ENCODE measurements at regions of chr12 and their contacts with region 1.

Region 1: GRCh38 chr12:102513272-102513671 is 32.9 kb upstream of the IGF1 start:
- DNase-seq: peak; percentile 48
- ATAC-seq: peak; percentile 95
- H3K4me3 ChIP-seq: no peak overlapping the region
- H3K27ac ChIP-seq: peak overlapping the region; percentile 45
- H3K4me1 ChIP-seq: peaks cover 19% of the 10 kb centered on the region
- H3K27me3 ChIP-seq: no peaks in the 10 kb centered on the region
- CTCF ChIP-seq: no peak
- EP300 ChIP-seq: 0 out of 4 replicates have a peak, but pooled peaks of 1 of the 2 experiments have one; percentile 45
- POLR2A ChIP-seq: no peak
- RAD21 ChIP-seq: no peak

Region 2: DNA sequence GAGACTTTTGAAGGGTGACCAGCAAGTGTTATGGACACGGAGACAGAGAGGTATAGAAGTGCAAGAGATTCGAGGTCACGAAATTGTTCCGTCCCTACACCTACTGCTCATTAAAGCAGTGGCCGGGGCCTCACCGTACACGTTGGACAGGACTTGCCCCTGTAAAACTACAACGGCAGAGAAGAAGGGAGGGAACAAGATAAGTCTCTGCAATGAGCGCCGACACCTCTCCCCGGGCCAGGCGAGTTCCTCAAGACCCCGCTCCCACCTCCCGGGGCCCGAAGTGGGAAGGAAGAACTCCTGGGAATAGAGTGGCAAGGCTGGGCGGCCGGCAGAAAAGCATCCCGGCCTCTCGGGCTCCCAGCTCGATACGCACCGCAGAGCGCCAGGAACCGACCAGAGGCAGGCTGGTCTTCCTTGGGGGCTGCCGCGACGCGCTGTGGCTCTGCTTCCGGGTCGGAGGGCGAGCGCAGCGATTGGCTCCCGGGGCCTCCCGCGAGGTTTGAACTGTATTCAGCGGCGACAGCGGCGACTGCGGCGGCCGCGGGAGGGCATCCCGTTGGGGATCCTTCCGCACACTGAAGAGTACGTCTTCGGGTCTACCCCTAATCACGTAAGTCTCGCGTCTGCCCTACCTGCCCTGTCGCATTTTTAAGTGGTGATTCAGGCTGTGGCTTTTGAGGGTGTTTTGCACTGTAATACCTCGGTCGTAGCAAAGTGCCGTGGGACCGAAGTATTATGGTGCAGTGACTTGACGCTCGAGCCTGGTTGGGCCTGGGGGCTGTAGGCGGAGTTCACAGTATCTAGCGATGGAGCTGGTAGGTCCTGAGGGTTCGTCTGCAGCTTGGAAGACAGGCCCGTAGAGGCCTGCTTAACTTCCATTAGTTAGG is 393.4 kb before region 1 on chr12 and contains the starts of genes NUP37 and PARPBP:
- CTCF ChIA-PET with region 1: no interaction called
- POLR2A ChIA-PET with region 1: no interaction called
- RAD21 ChIA-PET with region 1: no interaction called
- SMC1A ChIA-PET with region 1: no interaction called
- in situ Hi-C with region 1: no loop called
- intact Hi-C with region 1: no loop called
- DNase-seq: peak; percentile 68
- ATAC-seq: peak; percentile 95
- H3K4me3 ChIP-seq: peak within 1 kb of the TSS; percentile 88
- H3K27ac ChIP-seq: peak within 1 kb of the TSS; percentile 86
- H3K4me1 ChIP-seq: no peaks in the 10 kb centered on the region
- H3K27me3 ChIP-seq: no peaks in the 10 kb centered on the region
- CTCF ChIP-seq: peak in 1 of 3 experiments; percentile 8; a peak in 1 of 6 replicates
- EP300 ChIP-seq: 0 out of 4 replicates have a peak, but pooled peaks of 1 of the 2 experiments have one; percentile 6
- POLR2A ChIP-seq: peak; percentile 95
- RAD21 ChIP-seq: no peak
- polyA plus RNA-seq, gene NUP37: 191 to 250 TPM
- polyA plus RNA-seq, gene PARPBP: 29.2 to 40.3 TPM

Region 3: DNA sequence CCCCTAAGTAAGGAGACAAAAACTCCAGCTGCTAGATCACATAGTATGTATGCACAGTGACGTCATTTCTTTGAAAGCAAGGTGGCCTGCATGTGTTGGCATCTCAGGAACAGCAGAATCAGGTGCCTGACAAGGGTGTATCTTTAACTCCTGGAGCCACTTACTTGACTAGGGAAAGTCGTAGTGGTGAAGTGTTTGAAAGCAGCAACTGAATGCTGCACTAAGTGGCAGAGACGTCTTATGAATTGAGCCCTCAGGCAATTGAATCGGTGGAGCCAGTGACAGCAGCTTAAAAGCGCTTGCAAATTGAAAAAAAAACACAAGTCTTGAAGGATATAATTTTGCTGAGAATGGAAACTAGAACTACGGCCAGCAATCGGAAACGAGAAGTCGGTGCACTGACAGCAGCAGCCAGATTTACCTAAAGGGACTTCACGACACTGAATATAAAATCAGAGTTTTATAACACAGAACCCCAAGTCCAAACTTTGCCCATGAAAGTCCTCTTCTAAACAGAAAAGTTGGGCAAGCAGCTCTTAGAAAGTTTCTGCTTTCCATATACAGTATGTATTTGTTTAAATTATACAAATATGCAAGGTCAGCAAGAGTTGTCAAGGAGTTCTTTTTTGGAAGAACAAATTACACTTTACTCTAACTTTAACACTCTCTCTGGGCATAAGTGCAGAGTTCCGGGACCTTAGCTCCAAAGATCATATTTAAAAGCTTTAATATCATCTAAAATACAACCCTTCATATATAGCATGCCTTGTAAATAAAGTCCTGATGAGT is 34.0 kb before region 1 on chr12:
- CTCF ChIA-PET with region 1: interaction called, 24 read pairs
- POLR2A ChIA-PET with region 1: interaction called, 4 read pairs
- RAD21 ChIA-PET with region 1: interaction called, 28 read pairs
- SMC1A ChIA-PET with region 1: interaction called, 43 read pairs
- in situ Hi-C with region 1: no loop called
- intact Hi-C with region 1: no loop called
- DNase-seq: peak; percentile 62
- ATAC-seq: peak; percentile 54
- H3K4me3 ChIP-seq: peak overlapping the region; percentile 59
- H3K27ac ChIP-seq: peak overlapping the region; percentile 78
- H3K4me1 ChIP-seq: peaks cover 53% of the 10 kb centered on the region
- H3K27me3 ChIP-seq: no peaks in the 10 kb centered on the region
- CTCF ChIP-seq: no peak
- EP300 ChIP-seq: no peak
- POLR2A ChIP-seq: no peak
- RAD21 ChIP-seq: no peak

Region 4: DNA sequence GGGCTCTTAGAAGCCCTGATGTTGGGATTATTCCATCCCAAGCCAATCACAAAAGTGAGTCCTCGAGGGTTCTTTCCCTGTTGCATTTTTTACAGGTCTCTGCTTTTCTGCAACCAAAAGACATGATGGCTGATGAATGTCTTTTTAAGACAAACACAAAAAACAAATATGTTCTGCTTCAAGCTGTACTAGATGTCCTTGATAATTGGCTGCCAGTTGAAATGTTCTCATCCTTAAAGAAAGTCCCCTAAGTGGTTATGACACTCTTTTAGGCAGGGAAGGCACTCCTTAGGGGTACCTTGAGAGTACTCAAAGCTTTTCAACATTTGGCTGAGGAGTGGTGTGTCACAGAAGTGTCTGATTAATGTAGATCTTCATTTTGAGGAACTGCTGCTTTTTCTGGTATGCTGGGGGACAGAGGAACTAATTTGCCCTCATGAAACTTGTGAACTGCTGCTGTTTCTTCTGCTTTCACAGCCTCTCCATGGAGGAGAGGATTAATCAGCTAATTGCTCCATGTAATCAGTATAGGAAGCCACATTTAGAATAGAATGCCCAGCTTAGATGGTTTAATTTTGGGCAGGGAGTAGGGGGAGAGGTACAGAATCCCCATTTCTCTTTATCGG is 10.1 kb before region 1 on chr12:
- CTCF ChIA-PET with region 1: interaction called, 4 read pairs
- POLR2A ChIA-PET with region 1: interaction called, 18 read pairs
- RAD21 ChIA-PET with region 1: interaction called, 7 read pairs
- SMC1A ChIA-PET with region 1: interaction called, 25 read pairs
- in situ Hi-C with region 1: no loop called
- intact Hi-C with region 1: no loop called
- DNase-seq: peak; percentile 55
- ATAC-seq: peak; percentile 95
- H3K4me3 ChIP-seq: no peak overlapping the region; the same call in 1 of the 2 replicates
- H3K27ac ChIP-seq: peak overlapping the region; percentile 32; the same call in 1 of the 2 replicates
- H3K4me1 ChIP-seq: peaks cover 13% of the 10 kb centered on the region; the same call in 1 of the 2 replicates
- H3K27me3 ChIP-seq: no peaks in the 10 kb centered on the region
- CTCF ChIP-seq: no peak
- EP300 ChIP-seq: peak in 1 of 2 experiments; percentile 54; a peak in 1 of 4 replicates
- POLR2A ChIP-seq: no peak
- RAD21 ChIP-seq: no peak

Region 5: GRCh38 chr12:102776041-102776440 is 262.8 kb after region 1 on chr12:
- CTCF ChIA-PET with region 1: no interaction called
- POLR2A ChIA-PET with region 1: no interaction called
- RAD21 ChIA-PET with region 1: no interaction called
- SMC1A ChIA-PET with region 1: no interaction called
- in situ Hi-C with region 1: no loop called
- intact Hi-C with region 1: no loop called
- DNase-seq: no peak
- ATAC-seq: peak; percentile 93
- H3K4me3 ChIP-seq: no peak overlapping the region
- H3K27ac ChIP-seq: no peak overlapping the region
- H3K4me1 ChIP-seq: no peaks in the 10 kb centered on the region
- H3K27me3 ChIP-seq: no peaks in the 10 kb centered on the region
- CTCF ChIP-seq: no peak
- EP300 ChIP-seq: peak; percentile 69 to 82; a peak in 3 of 4 replicates
- POLR2A ChIP-seq: no peak
- RAD21 ChIP-seq: no peak

Measured in GM12878 (cell line).